Activated T-helper 2 cell treated with anti-CD3 and anti-CD28 coated beads, Interferon-gamma antibody, Interleukin-2, Interleukin-4, amounts not matched to agents 10 μg/mL and 5 μg/mL and 100 μg/mL, durations not matched to agents 14 hours and 24 hours and 36 hours (primary cell): ENCODE measurements at regions of chr7 and their contacts with region 1.

Region 1: DNA sequence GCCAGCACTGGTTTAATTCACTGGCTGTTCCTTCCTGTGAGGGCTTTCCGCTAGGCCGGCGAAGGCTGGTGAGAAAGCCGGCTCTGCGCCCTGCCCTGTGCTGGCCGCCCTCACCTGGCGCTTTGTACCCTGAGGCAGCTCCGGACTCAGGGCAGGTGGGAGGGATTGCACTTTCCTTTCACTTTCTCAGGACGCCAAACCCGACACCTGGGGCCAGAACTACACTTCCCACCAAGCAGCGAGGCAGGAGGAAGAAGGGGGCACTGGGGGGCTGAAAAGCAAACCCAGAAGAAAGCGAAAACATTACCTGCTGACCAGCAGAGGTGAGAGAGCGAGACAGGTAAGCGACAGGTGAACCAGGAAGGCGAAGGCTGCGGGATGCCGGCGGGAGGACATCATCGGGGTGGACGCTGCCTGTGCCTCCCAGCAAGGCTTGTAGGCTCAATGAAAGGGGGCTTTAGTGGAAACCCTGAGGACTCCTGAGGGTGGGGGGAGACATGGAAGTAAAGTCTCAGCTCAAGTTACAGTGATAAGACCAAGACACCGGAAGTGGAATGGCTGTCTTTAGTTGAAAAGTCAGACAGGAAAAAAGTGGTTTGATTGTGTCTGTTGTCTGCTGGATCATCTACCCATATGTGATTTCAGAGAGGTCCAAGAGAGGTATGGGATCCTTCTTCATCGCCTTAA is at the start of gene RAB19:
- DNase-seq: peak; percentile 43
- H3K4me3 Mint-ChIP-seq: peak within 1 kb of the TSS; percentile 92
- H3K27ac Mint-ChIP-seq: peak within 1 kb of the TSS; percentile 95
- H3K4me1 Mint-ChIP-seq: peaks cover 42% of the 10 kb centered on the region
- H3K27me3 Mint-ChIP-seq: no peaks in the 10 kb centered on the region
- total RNA-seq, gene RAB19: 12.5 and 14.5 TPM in 2 replicates

Region 2: GRCh38 chr7:140062528-140063299 is 341.3 kb before region 1 on chr7 and contains the start of gene PARP12:
- intact Hi-C with region 1: loop called (anchors 5 kb)
- DNase-seq: peak; percentile 88
- H3K4me3 Mint-ChIP-seq: peak within 1 kb of the TSS; percentile 81
- H3K27ac Mint-ChIP-seq: peak within 1 kb of the TSS; percentile 71
- H3K4me1 Mint-ChIP-seq: peaks cover 39% of the 10 kb centered on the region
- H3K27me3 Mint-ChIP-seq: peaks cover 4% of the 10 kb centered on the region
- total RNA-seq, gene PARP12: 23.6 and 24.6 TPM in 2 replicates

Region 3: GRCh38 chr7:140358412-140359051 is 45.5 kb before region 1 on chr7:
- intact Hi-C with region 1: loop called (anchors 1 kb)
- DNase-seq: peak; percentile 16
- H3K4me3 Mint-ChIP-seq: peak overlapping the region; percentile 62
- H3K27ac Mint-ChIP-seq: peak overlapping the region; percentile 97
- H3K4me1 Mint-ChIP-seq: peaks cover 29% of the 10 kb centered on the region
- H3K27me3 Mint-ChIP-seq: no peaks in the 10 kb centered on the region

Region 4: GRCh38 chr7:140390466-140391190 is 13.4 kb before region 1 on chr7:
- intact Hi-C with region 1: loop called (anchors 2 kb)
- DNase-seq: no peak
- H3K4me3 Mint-ChIP-seq: no peak overlapping the region
- H3K27ac Mint-ChIP-seq: no peak overlapping the region
- H3K4me1 Mint-ChIP-seq: peaks cover 5% of the 10 kb centered on the region
- H3K27me3 Mint-ChIP-seq: no peaks in the 10 kb centered on the region

Region 5: GRCh38 chr7:140479062-140479738 is 75.2 kb after region 1 on chr7 and contains the start of gene MKRN1:
- intact Hi-C with region 1: loop called (anchors 1 kb)
- DNase-seq: peak; percentile 89
- H3K4me3 Mint-ChIP-seq: peak within 1 kb of the TSS; percentile 97
- H3K27ac Mint-ChIP-seq: peak within 1 kb of the TSS; percentile 96
- H3K4me1 Mint-ChIP-seq: peaks cover 25% of the 10 kb centered on the region
- H3K27me3 Mint-ChIP-seq: no peaks in the 10 kb centered on the region
- total RNA-seq, gene MKRN1: 72.9 and 73.6 TPM in 2 replicates

Region 6: GRCh38 chr7:140924019-140924820 is 520.2 kb after region 1 on chr7:
- intact Hi-C with region 1: loop called (anchors 5 kb)
- DNase-seq: peak; percentile 62
- H3K4me3 Mint-ChIP-seq: no peak overlapping the region
- H3K27ac Mint-ChIP-seq: no peak overlapping the region
- H3K4me1 Mint-ChIP-seq: peaks cover 8% of the 10 kb centered on the region
- H3K27me3 Mint-ChIP-seq: peaks cover 2% of the 10 kb centered on the region

Region 7: DNA sequence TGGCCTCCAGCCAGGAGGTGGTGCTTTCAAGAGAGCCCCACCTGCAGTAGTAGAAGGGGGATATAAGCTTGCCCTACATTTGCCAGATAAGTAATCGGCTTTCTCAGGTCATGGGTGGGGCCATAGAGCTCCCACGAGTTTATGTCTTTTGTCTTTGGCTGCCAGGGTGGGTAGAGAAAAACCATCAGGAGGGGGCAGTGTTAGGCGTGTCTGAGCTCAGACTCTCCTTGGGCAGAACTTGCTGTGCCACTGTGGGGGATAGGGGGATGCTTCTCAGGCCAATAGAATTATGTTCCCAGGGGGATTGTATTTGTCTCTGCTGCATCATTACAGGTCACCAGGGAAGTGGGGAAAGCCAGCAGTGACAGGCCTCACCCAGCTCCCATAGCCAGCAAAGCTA is 623.0 kb after region 1 on chr7:
- intact Hi-C with region 1: no loop called
- DNase-seq: no peak
- H3K4me3 Mint-ChIP-seq: no peak overlapping the region
- H3K27ac Mint-ChIP-seq: no peak overlapping the region
- H3K4me1 Mint-ChIP-seq: peaks cover 15% of the 10 kb centered on the region
- H3K27me3 Mint-ChIP-seq: peaks cover 15% of the 10 kb centered on the region